Activated naive CD4-positive, alpha-beta T cell treated with anti-CD3 and anti-CD28 coated beads for 36 hours (primary cell): ENCODE measurements at regions of chr11 and their contacts with region 1.

Region 1: GRCh38 chr11:86047275-86047991 is 21.5 kb downstream of the PICALM start:
- DNase-seq: peak; percentile 69
- H3K4me3 Mint-ChIP-seq: peak overlapping the region; percentile 43
- H3K27ac Mint-ChIP-seq: peak overlapping the region; percentile 93
- H3K4me1 Mint-ChIP-seq: peaks cover 92% of the 10 kb centered on the region
- H3K27me3 Mint-ChIP-seq: no peaks in the 10 kb centered on the region

Region 2: DNA sequence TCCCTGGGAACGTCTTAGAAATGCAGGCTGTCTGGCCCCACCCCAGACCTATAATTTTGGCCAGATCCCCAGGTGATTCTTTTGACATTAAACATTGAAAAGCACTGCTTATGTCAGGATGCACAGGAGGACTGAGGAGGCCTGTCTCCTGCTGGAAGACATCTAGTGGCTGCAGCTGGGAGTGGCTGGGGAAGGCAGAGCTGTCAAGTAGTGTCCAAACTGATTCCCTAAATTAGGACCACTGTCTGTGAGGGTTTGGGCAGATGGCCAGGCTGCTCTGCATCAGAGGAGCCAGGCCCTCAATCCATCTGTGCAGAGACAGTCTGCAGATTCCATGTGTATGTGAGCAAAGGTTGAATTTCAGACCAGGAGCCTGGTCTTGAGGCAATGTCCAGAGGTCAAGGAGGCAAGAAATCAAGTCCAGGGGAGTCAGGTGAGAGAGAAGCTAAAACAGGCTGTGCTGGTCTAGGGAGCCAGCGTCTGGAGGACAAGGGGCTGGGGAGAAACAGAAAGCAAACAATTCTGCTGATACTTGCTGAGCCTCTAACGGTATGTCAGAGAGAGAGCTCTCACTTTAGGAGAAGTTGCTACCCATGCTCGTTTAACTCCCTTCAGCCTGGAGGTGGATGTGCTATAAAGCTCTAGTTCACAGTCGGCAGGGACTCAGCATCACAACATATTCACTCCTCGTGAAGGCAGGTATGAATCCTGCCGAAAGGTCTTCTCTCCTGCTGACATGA is 221.1 kb before region 1 on chr11:
- CTCF ChIA-PET with region 1: no interaction called
- intact Hi-C with region 1: loop called (anchors 1 kb)
- DNase-seq: peak; percentile 51
- H3K4me3 Mint-ChIP-seq: peak overlapping the region; percentile 28
- H3K27ac Mint-ChIP-seq: peak overlapping the region; percentile 20
- H3K4me1 Mint-ChIP-seq: peaks cover 57% of the 10 kb centered on the region
- H3K27me3 Mint-ChIP-seq: no peaks in the 10 kb centered on the region

Region 3: DNA sequence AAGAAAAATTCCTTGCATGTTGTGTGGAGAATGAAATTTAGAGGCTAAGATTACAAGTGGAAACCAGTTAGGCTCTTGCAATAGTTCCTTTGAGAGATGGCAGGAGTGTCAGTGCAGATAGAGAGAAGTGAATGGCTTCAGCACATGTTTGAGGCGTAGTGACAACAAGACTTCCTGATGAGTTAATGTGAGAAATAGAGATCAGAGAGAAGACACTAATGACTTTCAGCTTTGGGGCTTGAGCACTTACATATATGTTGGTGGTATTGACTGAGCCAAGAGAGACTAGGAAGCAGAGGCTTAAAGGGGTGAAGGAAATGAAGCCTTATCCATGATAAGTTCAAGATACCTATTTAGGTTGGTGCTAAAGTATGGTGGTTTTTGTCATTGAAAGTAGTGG is 77.4 kb after region 1 on chr11:
- CTCF ChIA-PET with region 1: interaction called, 3 read pairs
- intact Hi-C with region 1: loop called (anchors 1 kb)
- DNase-seq: peak; percentile 13
- H3K4me3 Mint-ChIP-seq: no peak overlapping the region
- H3K27ac Mint-ChIP-seq: peak overlapping the region; percentile 2
- H3K4me1 Mint-ChIP-seq: peaks cover 23% of the 10 kb centered on the region
- H3K27me3 Mint-ChIP-seq: peaks cover 11% of the 10 kb centered on the region

Region 4: DNA sequence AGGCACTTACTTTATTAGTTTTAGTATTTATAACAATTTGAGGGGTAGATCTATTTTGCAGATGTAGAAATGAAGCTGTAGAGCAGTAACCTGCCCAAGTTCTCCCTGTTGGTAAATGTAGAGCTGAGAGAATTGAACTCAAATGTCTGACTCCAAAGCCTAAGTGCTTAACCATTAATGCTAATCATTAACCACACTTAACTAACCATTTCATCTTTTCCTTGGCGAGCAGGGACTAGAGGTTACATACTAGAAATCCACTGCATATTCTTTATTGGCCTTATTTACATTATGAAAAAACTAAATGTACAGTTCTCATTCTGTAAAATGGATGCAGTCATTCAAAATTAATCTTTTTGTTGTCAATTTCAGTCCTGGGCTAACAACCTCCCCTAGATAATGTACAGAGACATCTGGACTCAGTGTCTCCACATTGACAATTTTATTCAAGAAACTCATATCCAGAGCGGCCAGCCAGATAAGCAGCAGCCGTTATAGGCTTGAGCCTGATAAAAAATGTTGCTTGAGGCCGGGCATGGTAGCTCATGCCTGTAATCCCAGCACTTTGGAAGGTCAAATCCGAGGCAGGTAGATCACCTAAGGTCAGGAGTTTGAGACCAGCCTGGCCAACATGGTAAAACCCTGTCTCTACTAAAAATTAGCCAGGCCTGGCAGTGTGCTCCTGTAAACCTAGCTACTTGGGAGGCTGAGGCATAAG is 98.2 kb after region 1 on chr11:
- CTCF ChIA-PET with region 1: no interaction called
- intact Hi-C with region 1: no loop called
- DNase-seq: no peak
- H3K4me3 Mint-ChIP-seq: no peak overlapping the region
- H3K27ac Mint-ChIP-seq: no peak overlapping the region
- H3K4me1 Mint-ChIP-seq: peaks cover 2% of the 10 kb centered on the region
- H3K27me3 Mint-ChIP-seq: no peaks in the 10 kb centered on the region

Region 5: DNA sequence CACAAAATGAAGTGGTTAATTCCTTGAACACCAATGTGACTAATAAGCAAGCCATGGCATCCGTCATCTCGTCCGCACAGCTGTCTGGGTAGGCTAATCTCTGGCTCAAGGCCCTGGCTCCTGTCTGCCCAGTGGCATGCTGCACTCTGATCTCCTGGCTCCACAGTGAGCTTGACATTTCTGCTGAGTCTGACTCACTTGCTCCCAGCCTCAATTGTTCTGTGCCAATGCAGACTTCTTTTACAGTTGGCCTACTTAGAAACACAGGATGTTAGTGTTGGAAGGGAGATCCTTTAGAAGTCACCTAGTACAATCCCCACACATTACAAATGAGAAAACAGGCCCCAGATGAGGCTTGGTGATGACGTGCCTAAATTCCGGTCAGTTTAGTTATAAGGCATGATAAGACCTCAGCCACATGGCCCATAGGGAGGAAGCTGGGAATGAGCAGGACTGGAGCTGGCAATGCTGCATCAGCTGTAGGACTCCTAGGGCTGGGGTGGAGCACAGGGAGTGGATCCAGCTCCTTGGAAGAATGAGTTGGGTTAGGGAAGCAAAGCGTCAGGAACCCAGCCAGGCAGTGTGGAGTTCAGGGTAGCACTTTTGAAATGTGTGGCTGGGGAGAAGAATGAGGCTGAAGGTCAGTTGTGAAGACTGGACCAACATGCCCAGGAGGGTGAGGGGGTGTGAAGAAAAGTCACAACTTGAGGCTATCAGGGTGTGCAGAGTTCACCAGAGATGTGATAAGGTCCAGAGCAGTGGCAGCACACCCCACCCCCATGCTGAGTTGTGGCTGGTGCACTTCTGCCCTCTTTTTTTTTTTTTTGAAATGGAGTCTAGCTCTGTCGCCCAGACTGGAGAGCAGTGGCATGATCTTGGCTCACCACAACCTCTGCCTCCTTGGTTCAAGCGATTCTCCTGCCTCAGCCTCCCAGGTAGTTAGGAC is 126.9 kb after region 1 on chr11:
- CTCF ChIA-PET with region 1: interaction called, 5 read pairs
- intact Hi-C with region 1: loop called (anchors 1 kb)
- DNase-seq: no peak
- H3K4me3 Mint-ChIP-seq: no peak overlapping the region
- H3K27ac Mint-ChIP-seq: no peak overlapping the region
- H3K4me1 Mint-ChIP-seq: peaks cover 20% of the 10 kb centered on the region
- H3K27me3 Mint-ChIP-seq: no peaks in the 10 kb centered on the region

Region 6: GRCh38 chr11:86230921-86231430 is 183.5 kb after region 1 on chr11:
- CTCF ChIA-PET with region 1: interaction called, 4 read pairs
- intact Hi-C with region 1: loop called (anchors 1 kb)
- DNase-seq: no peak
- H3K4me3 Mint-ChIP-seq: no peak overlapping the region
- H3K27ac Mint-ChIP-seq: peak overlapping the region; percentile 15
- H3K4me1 Mint-ChIP-seq: peaks cover 62% of the 10 kb centered on the region
- H3K27me3 Mint-ChIP-seq: no peaks in the 10 kb centered on the region

Region 7: DNA sequence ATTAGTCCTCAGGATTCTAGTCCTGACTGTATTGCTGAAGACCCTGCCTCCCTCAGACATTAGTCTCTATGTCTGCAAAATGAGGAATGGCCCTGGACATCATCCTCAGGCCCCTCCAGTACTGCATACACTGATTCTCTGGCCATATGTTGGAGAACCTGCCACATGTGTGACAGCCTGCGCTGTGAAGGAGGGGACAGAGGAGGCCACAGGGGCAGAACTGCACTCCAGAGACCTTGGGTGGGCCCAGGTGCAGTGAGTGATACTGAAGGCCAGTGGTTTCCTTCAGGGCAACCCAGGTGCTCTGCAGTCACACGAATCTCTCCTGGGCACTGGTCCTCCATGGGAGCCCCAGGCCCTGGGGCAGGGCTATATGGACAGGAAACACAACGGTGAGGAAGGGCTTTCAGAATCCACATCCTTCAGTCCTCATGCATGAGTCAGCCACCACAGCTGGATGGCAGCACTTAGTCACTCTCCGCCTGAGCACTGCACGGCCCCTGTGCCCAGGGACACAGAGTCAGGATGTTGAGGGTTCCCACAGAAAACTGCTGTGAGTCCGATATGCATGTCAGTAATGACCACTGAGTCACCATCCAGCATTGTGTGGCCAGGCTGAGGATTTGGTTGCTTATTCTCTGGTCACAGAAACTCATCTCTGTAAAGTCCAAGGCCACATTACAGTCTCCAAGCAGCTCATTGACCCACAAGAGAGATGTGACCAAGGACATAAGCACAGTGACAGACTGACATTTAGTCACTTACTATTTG is 585.3 kb after region 1 on chr11:
- CTCF ChIA-PET with region 1: no interaction called
- intact Hi-C with region 1: no loop called
- DNase-seq: peak; percentile 61
- H3K4me3 Mint-ChIP-seq: no peak overlapping the region
- H3K27ac Mint-ChIP-seq: no peak overlapping the region
- H3K4me1 Mint-ChIP-seq: peaks cover 6% of the 10 kb centered on the region
- H3K27me3 Mint-ChIP-seq: no peaks in the 10 kb centered on the region